PC-3 (cell line): ENCODE measurements at regions of chr12 and their contacts with region 1.

Region 1: DNA sequence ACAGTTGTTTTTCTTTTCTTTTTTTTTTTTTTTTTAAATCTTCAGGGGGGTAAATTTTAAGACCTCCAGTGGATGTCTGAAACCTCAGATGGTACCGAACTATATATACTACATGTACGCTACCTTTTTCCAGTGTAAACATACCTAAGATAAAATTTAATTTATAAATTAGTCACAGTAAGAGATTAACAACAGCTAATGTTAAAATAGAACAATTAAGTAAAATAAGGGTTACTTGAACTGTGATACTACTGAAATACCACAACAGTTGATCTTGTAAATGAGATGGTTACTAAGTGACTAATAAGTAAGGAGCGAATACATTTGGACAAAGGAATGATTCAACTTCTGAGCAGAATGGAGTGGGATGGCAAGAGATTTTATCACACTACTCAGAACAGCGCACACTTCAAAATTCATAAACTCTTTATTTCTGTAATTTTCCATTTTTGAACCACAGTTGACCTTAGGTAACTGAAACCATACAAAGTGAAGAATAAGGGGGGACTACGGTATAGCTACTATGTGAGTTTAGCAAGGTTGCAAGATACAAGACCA is 80.5 kb upstream of the PCED1B start:
- DNase-seq: peak; percentile 86
- ATAC-seq: peak; percentile 100
- H3K4me3 ChIP-seq: no peak overlapping the region
- H3K27ac ChIP-seq: peak overlapping the region; percentile 51
- H3K4me1 ChIP-seq: peaks cover 20% of the 10 kb centered on the region
- H3K27me3 ChIP-seq: no peaks in the 10 kb centered on the region
- CTCF ChIP-seq: no peak

Region 2: DNA sequence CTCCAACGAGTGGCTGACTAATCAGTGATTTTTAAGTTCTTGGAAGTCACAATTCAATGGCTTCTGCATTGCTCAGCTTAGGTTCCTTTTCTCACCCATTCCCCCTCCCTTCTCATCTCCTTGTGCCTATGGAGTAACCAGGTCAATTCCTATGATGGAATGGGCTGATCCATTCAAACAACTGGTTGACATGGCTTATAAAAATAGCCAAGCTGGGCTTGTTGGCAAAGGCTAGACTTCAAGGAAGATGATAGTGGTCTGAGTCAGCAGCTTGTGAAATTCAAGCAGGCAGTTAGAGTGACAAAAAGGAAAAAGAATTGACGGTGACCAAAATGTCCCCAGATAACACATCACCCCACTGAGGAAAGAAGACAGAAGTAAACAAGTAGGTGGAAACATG is 39.4 kb before region 1 on chr12:
- CTCF ChIA-PET with region 1: no interaction called
- POLR2A ChIA-PET with region 1: interaction called, 16 read pairs
- intact Hi-C with region 1: no loop called
- DNase-seq: peak; percentile 98
- ATAC-seq: peak; percentile 99
- H3K4me3 ChIP-seq: no peak overlapping the region
- H3K27ac ChIP-seq: peak overlapping the region; percentile 68
- H3K4me1 ChIP-seq: peaks cover 31% of the 10 kb centered on the region
- H3K27me3 ChIP-seq: no peaks in the 10 kb centered on the region
- CTCF ChIP-seq: no peak

Region 3: DNA sequence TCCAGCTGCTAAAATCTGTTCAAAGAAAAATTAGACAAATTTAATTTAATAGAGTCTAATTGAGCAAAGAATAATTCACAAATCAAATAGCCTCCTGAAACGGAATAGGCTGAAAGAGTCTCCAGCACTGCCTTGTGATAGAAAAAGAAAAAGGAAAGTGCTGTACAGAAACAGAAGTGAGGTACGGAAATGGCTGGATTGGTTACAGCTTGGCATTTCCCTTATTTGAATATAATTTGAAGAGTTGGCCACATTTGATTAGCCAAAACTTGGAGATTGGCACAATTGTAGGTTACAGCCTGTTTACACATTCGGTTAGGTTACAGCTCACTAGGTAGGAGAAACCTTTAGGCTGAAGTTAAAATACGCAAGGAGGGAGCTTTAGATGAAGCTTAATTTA is 55.8 kb after region 1 on chr12:
- CTCF ChIA-PET with region 1: no interaction called
- POLR2A ChIA-PET with region 1: no interaction called
- intact Hi-C with region 1: no loop called
- DNase-seq: no peak
- ATAC-seq: no peak
- H3K4me3 ChIP-seq: no peak overlapping the region
- H3K27ac ChIP-seq: no peak overlapping the region
- H3K4me1 ChIP-seq: no peaks in the 10 kb centered on the region
- H3K27me3 ChIP-seq: no peaks in the 10 kb centered on the region
- CTCF ChIP-seq: no peak